BJ (cell line): ENCODE measurements at regions of chr12 and their contacts with region 1.

Region 1: DNA sequence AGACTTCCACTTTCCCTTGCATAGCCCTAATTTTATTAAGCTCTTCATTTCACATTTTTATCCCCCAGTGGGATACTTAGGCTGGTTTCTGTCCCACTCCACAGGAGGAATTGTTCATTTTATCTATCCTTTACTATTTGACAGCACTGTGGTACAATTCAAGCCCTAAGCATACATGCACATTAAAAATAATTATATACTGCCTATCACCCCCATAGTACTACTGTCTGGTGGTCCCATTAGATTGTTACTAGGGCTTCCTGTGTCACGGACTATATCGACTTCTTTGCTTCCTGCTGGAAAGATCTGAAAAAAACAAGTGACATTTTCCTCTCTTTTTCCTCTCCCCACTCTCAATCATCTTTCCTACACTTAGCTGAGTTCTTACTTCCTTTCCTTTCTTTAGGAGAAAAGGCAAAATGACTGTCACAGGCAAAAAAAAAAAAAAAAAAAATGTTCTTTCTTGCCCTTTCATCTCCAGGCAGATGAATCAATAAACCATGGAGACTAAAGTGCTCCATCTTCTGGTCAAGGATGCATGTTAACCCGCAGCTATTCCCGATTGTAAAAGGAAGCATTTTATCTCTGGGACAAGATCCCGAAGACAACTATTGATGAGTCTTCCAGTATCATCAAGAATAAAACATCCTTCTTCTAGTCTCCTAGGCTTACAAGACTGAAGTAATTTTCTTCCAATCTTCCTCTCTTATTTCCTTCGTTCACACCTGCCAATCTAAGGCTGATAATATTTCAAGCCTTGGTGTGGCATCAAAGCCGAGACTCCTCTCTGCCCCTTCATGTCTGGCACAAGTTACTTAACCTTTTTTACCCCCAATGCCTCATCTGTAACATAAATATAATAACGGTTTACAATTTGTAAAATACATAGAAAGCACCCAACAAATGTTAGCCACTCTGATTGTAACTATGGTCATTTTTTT is 94.4 kb upstream of the PLEKHG7 start:
- DNase-seq: no peak
- H3K4me3 ChIP-seq: no peak overlapping the region
- H3K27me3 ChIP-seq: no peaks in the 10 kb centered on the region
- CTCF ChIP-seq: peak; percentile 69

Region 2: DNA sequence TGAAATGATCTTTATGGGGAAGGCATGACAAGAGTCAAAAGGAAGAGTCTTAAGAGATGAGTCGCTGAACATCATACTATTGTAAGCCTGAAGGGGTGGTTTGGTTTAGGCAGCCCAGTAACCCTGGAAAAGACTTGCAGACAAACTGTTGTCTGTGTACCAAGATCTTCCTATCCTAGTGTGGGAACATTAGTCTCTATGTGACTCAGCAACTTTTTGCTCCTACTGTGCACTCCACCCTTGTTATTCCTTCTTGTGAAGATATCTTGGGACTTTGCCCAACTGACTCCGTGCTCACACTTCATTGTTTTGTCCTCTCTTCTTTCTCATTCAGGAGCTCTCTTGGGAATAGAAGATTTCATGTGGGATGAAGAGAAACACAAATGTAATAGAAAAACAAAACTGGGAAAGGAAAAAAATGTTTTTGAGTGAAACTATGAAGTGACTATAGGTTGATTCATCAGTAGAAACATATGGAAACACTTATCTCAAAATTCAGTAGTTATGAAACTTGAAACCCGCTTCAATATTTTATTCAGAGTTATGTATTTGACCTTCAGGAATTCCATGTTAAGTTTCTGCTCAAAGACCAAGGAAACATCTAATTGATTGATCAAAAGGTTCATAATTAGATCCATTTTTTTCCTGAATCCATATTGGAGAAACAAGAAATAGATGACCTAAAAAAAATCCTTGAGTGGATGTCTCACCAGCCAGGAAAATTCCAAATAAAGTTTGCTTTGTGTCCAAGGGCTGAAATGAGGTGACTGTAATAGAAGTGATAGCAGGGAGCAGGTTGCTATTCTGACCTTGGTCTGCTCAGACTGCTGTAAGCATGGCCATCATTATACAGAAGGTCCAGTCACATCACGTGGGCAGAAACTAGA is 530.0 kb before region 1 on chr12:
- CTCF ChIA-PET with region 1: no interaction called
- POLR2A ChIA-PET with region 1: interaction called, 15 read pairs
- DNase-seq: peak; percentile 94
- H3K4me3 ChIP-seq: no peak overlapping the region
- H3K27me3 ChIP-seq: no peaks in the 10 kb centered on the region
- CTCF ChIP-seq: no peak

Region 3: DNA sequence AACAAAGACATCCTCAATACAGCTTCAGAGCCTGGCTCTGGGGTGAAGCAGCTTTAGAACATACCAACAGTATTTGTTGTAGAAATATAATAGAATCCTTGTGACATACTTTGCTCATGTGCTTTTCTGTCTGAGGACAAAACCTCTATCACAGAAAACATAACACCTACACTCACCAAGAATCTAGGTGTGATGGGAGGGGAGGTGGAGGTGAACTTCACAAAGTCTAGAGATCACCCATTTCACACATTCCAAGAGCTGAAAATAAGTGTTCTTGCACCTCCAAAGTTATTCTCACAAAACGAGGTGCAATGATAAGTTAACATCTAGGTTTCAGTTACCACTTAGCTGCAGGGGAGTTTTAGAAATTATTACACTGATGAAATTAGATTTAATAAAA is 430.1 kb before region 1 on chr12:
- CTCF ChIA-PET with region 1: no interaction called
- POLR2A ChIA-PET with region 1: no interaction called
- DNase-seq: no peak
- H3K4me3 ChIP-seq: no peak overlapping the region
- H3K27me3 ChIP-seq: no peaks in the 10 kb centered on the region
- CTCF ChIP-seq: no peak

Region 4: DNA sequence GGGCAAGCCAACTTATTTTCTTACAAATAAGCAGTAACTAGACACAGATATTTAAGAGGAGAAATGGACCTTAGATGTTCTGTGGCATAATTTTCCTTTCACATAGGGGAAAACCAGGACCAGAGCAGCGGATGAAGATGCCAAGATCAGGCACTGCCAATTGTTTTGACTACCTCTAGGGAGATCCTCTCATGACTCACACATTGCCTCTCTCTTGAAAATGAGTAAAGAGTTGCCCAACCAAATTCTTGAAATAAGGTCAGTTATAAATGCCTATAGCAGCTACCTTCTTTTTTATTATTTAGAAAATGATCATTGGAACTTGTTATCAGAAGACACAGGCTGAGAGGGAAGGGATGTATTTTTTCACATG is 169.0 kb before region 1 on chr12:
- CTCF ChIA-PET with region 1: no interaction called
- POLR2A ChIA-PET with region 1: no interaction called
- DNase-seq: no peak
- H3K4me3 ChIP-seq: no peak overlapping the region
- H3K27me3 ChIP-seq: no peaks in the 10 kb centered on the region
- CTCF ChIP-seq: no peak

Region 5: GRCh38 chr12:92619730-92620684 is 11.6 kb after region 1 on chr12:
- CTCF ChIA-PET with region 1: interaction called, 10 read pairs
- POLR2A ChIA-PET with region 1: no interaction called
- DNase-seq: no peak
- H3K4me3 ChIP-seq: no peak overlapping the region
- H3K27me3 ChIP-seq: no peaks in the 10 kb centered on the region
- CTCF ChIP-seq: no peak